Activated T-helper 2 cell treated with anti-CD3 and anti-CD28 coated beads, Interferon-gamma antibody, Interleukin-2, Interleukin-4, amounts not matched to agents 10 μg/mL and 5 μg/mL and 100 μg/mL, durations not matched to agents 14 hours and 24 hours and 36 hours (primary cell): ENCODE measurements at regions of chr3 and their contacts with region 1.

Region 1: GRCh38 chr3:71702131-71703024 is 22.8 kb downstream of the EIF4E3 start:
- DNase-seq: peak; percentile 32
- H3K4me3 Mint-ChIP-seq: peak overlapping the region; percentile 35
- H3K27ac Mint-ChIP-seq: peak overlapping the region; percentile 89
- H3K4me1 Mint-ChIP-seq: peaks cover 48% of the 10 kb centered on the region
- H3K27me3 Mint-ChIP-seq: no peaks in the 10 kb centered on the region

Region 2: GRCh38 chr3:71689305-71689704 is 13.1 kb before region 1 on chr3:
- intact Hi-C with region 1: loop called (anchors 2 kb)
- DNase-seq: no peak
- H3K4me3 Mint-ChIP-seq: no peak overlapping the region
- H3K27ac Mint-ChIP-seq: no peak overlapping the region
- H3K4me1 Mint-ChIP-seq: peaks cover 28% of the 10 kb centered on the region
- H3K27me3 Mint-ChIP-seq: no peaks in the 10 kb centered on the region

Region 3: GRCh38 chr3:71752831-71753629 is 50.7 kb after region 1 on chr3:
- intact Hi-C with region 1: no loop called
- DNase-seq: no peak
- H3K4me3 Mint-ChIP-seq: peak overlapping the region; percentile 43
- H3K27ac Mint-ChIP-seq: no peak overlapping the region
- H3K4me1 Mint-ChIP-seq: peaks cover 3% of the 10 kb centered on the region
- H3K27me3 Mint-ChIP-seq: peaks cover 73% of the 10 kb centered on the region